ENCODE measurements at regions of chr15 and their contacts with region 1.

Region 1: GRCh38 chr15:26838742-26839460 is 28.0 kb upstream of the GABRA5 start:
- DNase-seq: peak; percentile 81
- ATAC-seq: peak; percentile 88
- H3K4me3 Mint-ChIP-seq: peak overlapping the region; percentile 63
- H3K27ac Mint-ChIP-seq: no peak overlapping the region
- H3K4me1 Mint-ChIP-seq: peaks cover 32% of the 10 kb centered on the region
- H3K27me3 Mint-ChIP-seq: no peaks in the 10 kb centered on the region; the same call in 1 of the 2 replicates
- CTCF ChIP-seq: peak; percentile 92

Region 2: DNA sequence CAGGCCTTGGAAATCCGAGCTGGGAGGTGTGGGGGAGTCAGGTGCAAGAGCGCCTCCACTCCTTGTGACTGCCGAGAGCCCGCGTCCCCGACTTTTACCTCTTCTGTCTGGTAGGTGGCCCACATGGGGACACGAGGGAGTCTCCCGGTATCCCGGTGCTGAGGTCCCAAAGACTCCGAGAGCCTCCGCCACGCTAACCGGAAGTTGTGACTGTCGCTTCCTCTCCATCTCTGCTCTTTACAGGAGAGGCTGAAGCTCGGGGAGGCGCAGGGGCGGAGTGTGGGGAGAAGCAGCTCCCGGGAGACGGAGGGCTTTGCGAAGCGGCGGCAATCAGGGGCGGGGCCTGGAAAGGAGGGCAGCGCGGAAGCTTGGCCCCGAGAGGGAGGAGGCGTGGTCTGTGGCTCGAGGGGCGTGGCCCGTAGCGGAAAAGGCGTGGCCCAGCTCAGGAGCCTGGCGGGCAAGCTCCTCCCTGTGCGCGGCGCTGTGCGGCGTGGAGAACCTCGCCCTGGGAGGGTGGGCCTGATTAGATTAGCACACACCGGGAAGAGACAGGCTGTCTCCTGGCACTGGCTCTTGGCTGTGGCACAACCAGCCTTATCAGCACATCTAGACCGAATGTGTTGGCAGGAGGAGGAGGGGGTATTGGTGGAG is 209.9 kb before region 1 on chr15:
- CTCF ChIA-PET with region 1: interaction called, 12 read pairs
- POLR2A ChIA-PET with region 1: no interaction called
- DNase-seq: peak; percentile 91
- ATAC-seq: peak; percentile 86
- H3K4me3 Mint-ChIP-seq: peak overlapping the region; percentile 60
- H3K27ac Mint-ChIP-seq: peak overlapping the region; percentile 90
- H3K4me1 Mint-ChIP-seq: peaks cover 94% of the 10 kb centered on the region
- H3K27me3 Mint-ChIP-seq: no peaks in the 10 kb centered on the region
- CTCF ChIP-seq: no peak

Region 3: GRCh38 chr15:26641144-26641543 is 197.8 kb before region 1 on chr15:
- CTCF ChIA-PET with region 1: no interaction called
- POLR2A ChIA-PET with region 1: no interaction called
- DNase-seq: no peak
- ATAC-seq: no peak
- H3K4me3 Mint-ChIP-seq: no peak overlapping the region
- H3K27ac Mint-ChIP-seq: no peak overlapping the region
- H3K4me1 Mint-ChIP-seq: peaks cover 67% of the 10 kb centered on the region
- H3K27me3 Mint-ChIP-seq: no peaks in the 10 kb centered on the region
- CTCF ChIP-seq: no peak

Region 4: DNA sequence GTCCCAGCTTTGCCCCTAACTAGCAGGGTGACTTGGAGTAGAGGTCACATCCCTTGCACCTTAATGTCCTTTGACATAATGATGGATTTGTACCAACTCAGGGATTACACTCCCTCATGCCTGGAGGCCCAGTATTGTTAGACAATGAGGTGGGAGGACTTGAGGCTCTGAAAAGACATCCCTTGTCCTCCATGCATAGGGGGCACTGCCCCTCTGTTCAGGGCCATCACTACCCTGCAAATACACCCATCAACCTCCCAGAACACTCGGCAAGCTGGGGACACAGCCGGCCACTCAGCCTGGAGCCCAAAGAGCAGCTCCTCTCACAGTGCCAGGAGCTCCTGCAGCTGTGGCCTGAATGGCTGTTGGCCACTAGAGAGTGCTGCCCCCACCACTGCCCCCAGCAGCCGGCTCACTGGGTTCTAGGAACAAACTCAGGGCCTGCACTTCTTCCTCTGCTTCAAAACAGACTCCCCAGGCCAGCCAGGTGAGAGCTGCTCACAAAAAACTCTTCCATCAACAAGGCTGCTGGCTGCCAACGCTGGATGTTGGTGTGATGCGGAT is 156.2 kb before region 1 on chr15:
- CTCF ChIA-PET with region 1: interaction called, 16 read pairs
- POLR2A ChIA-PET with region 1: no interaction called
- DNase-seq: peak; percentile 34
- ATAC-seq: peak; percentile 59
- H3K4me3 Mint-ChIP-seq: no peak overlapping the region
- H3K27ac Mint-ChIP-seq: peak overlapping the region; percentile 45; the same call in 1 of the 2 replicates
- H3K4me1 Mint-ChIP-seq: peaks cover 73% of the 10 kb centered on the region
- H3K27me3 Mint-ChIP-seq: no peaks in the 10 kb centered on the region
- CTCF ChIP-seq: no peak

Region 5: DNA sequence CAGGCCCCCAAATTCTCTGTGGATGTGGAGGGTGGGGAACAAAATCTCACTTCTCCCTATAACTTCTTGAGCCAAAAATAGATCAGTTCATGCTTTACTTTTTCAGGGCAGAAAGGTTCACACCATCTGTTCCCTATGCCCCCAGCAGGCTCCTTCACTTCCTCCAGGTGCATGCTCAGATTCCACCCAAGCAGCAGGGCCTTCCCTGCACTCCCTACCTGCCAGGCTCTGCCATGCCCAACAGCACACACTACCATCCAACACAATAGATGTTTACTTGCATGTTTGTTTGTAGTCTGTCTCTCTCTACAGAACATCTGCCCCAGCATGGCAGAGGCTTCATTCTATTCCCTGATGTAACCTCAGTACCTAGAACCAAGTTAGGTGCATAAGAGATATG is 109.3 kb before region 1 on chr15:
- CTCF ChIA-PET with region 1: no interaction called
- POLR2A ChIA-PET with region 1: no interaction called
- DNase-seq: no peak
- ATAC-seq: peak; percentile 26; the same call in 1 of the 2 replicates
- H3K4me3 Mint-ChIP-seq: no peak overlapping the region
- H3K27ac Mint-ChIP-seq: 0 out of 2 replicates have a peak overlapping the region, but pooled peaks have one; percentile 37
- H3K4me1 Mint-ChIP-seq: peaks cover 67% of the 10 kb centered on the region
- H3K27me3 Mint-ChIP-seq: no peaks in the 10 kb centered on the region
- CTCF ChIP-seq: no peak

Region 6: DNA sequence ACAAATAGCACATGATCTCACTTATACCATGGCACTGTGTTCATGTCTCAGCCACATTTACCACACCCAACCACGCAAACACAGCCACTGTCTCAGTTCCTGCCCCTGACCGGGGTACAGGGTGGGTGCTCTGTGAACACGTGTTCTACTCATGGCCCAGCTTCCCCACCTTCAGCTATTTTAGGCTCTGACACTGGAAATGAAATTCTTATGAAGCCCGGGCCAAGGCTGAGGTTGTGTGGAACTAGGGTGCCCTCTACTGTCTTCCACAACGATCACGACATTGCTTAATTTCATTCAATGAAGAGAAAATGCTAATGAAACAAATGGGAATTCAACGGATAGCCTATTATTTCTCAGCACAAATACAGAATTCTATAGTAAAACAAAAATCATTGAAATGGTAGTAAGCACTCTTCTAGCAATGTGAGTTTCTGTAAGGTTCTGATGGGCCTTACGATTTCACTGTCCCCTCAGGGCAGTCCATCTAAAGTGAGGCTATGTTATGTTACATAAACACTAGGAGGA is 25.8 kb after region 1 on chr15:
- CTCF ChIA-PET with region 1: interaction called, 61 read pairs
- POLR2A ChIA-PET with region 1: no interaction called
- DNase-seq: peak; percentile 60
- ATAC-seq: peak; percentile 26
- H3K4me3 Mint-ChIP-seq: peak overlapping the region; percentile 43
- H3K27ac Mint-ChIP-seq: no peak overlapping the region
- H3K4me1 Mint-ChIP-seq: peaks cover 25% of the 10 kb centered on the region
- H3K27me3 Mint-ChIP-seq: peaks cover 38% of the 10 kb centered on the region
- CTCF ChIP-seq: peak; percentile 36; the same call in 1 of the 2 replicates

Region 7: GRCh38 chr15:26954403-26954802 is 115.5 kb after region 1 on chr15:
- CTCF ChIA-PET with region 1: no interaction called
- POLR2A ChIA-PET with region 1: no interaction called
- DNase-seq: no peak
- ATAC-seq: no peak
- H3K4me3 Mint-ChIP-seq: no peak overlapping the region
- H3K27ac Mint-ChIP-seq: no peak overlapping the region
- H3K4me1 Mint-ChIP-seq: no peaks in the 10 kb centered on the region
- H3K27me3 Mint-ChIP-seq: no peaks in the 10 kb centered on the region
- CTCF ChIP-seq: no peak

Measured in WTC11 (cell line).